GM10248 (cell line): ENCODE measurements at regions of chr4 and their contacts with region 1.

Region 1: GRCh38 chr4:72468904-72469502 is 100.0 kb downstream of the ADAMTS3 start:
- DNase-seq: no peak
- CTCF ChIP-seq: peak; percentile 52

Region 2: GRCh38 chr4:72326692-72327632 is 142.0 kb before region 1 on chr4:
- CTCF ChIA-PET with region 1: interaction called, 18 read pairs
- POLR2A ChIA-PET with region 1: no interaction called
- DNase-seq: peak; percentile 4
- CTCF ChIP-seq: peak; percentile 43